MCF 10A (cell line): ENCODE measurements at regions of chr1 and their contacts with region 1.

Region 1: DNA sequence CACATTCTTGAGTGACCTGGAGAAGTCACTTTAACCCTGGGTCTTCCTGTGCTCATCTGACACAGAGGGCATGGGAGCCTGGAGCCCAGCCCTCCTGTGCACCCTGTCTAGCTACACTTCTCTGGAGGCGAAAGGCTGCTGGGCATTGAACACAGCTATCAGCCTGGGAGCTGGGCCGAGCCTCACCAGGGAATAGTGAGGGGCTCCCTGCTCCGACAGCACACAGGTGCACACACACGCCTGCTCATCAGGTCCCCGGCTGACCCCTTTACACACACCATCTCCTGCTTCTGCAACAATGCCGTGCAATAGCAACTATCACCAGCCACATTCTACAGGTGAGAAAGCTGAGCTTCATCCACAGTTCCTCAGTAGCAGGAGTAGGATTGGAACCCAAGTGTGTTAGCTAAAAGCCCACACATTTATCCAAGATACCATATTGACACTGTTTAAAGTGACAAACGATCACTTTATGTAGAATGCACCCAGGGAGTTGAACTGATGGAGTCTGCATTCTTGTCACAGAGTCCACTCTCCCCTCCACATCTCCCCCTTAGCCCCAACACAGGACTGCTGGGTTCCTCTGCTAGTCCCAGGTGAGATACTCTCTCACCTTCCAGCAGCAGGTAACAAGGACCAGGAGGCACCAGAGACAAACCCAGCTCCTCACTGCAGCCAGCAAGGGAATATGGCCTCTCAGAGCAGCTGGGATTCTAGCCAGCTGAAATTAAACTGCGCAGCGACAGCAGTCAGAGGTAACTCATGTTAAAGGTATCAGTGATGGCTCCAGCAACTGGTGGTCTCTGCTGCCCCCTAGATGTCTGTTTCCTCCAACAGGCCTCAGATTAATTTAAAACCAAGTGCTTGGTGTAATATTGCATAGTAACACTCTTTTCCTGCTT is 18.3 kb upstream of the CAPN8 start:
- DNase-seq: peak; percentile 85
- H3K4me3 Mint-ChIP-seq: no peak overlapping the region
- H3K27ac Mint-ChIP-seq: no peak overlapping the region
- H3K4me1 Mint-ChIP-seq: peaks cover 6% of the 10 kb centered on the region
- H3K27me3 Mint-ChIP-seq: no peaks in the 10 kb centered on the region
- CTCF ChIP-seq: peak; percentile 94

Region 2: GRCh38 chr1:223097713-223098112 is 586.1 kb before region 1 on chr1:
- CTCF ChIA-PET with region 1: interaction called, 19 read pairs
- POLR2A ChIA-PET with region 1: no interaction called
- intact Hi-C with region 1: loop called (anchors 5 kb)
- DNase-seq: no peak
- H3K4me3 Mint-ChIP-seq: no peak overlapping the region
- H3K27ac Mint-ChIP-seq: no peak overlapping the region
- H3K4me1 Mint-ChIP-seq: no peaks in the 10 kb centered on the region
- H3K27me3 Mint-ChIP-seq: no peaks in the 10 kb centered on the region
- CTCF ChIP-seq: no peak

Region 3: DNA sequence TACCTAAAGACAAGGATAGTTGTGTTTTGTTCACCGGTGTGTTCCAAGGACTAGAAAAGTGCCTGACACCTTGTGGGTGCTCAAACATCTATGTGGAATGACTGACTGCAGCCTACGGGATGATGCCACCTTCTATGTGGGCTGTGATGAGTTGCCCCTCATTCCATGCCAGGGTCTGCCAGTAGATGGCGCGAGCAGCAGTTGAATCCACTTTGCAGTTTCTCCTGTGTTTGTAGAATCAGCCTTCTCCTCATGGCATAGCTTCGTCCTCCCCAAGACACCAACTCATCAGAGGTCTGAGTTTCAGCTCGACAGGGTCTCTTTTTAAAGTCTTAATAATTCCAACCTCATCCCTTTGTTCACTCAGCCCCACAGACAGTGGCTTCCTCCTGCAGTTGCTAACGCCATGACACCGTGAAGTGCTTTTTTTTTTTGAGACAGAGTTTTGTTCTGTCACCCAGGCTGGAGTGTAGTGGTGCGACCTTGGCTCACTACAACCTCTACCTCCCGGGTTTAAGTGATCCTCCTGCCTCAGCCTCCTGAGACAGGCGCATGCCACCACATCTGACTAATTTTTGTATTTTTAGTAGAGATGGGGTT is 152.0 kb before region 1 on chr1:
- CTCF ChIA-PET with region 1: interaction called, 11 read pairs
- POLR2A ChIA-PET with region 1: no interaction called
- intact Hi-C with region 1: loop called (anchors 1 kb)
- DNase-seq: peak; percentile 87
- H3K4me3 Mint-ChIP-seq: no peak overlapping the region
- H3K27ac Mint-ChIP-seq: no peak overlapping the region
- H3K4me1 Mint-ChIP-seq: no peaks in the 10 kb centered on the region
- H3K27me3 Mint-ChIP-seq: peaks cover 24% of the 10 kb centered on the region
- CTCF ChIP-seq: peak; percentile 90

Region 4: DNA sequence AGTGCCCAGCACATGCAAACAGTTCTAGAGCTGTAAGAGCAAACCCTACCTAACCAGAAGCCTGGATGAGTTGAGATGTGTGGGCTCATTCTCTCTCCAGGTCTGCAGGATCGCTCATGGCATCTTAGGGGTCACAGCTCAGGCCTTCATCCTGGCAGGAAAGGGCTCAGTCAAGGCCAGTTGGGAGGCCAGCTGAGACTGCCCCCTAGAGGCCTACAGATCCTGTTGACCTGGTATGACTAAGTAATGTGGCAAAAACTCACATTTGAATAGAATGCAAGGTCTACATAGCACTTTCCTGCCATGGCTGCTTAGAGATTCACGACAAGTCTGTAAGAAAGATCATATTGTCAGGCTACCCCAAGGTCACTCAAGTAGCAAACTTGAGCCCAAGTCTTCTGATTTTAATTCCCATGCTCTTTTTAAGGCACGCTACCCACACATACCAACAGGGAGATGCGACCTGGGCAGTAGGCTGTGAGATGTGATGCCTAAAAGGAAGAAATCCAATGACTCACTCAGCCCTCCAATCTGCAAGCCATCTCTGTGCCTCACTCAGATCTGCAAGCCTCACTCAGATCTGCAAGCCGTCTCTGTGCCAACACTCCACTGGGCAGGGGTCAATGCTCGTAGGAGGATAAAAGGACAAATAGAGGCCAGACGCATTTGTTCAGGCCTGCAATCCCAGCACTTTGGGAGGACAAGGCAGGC is 13.2 kb before region 1 on chr1:
- CTCF ChIA-PET with region 1: interaction called, 31 read pairs
- POLR2A ChIA-PET with region 1: interaction called, 3 read pairs
- intact Hi-C with region 1: no loop called
- DNase-seq: peak; percentile 87
- H3K4me3 Mint-ChIP-seq: no peak overlapping the region
- H3K27ac Mint-ChIP-seq: no peak overlapping the region
- H3K4me1 Mint-ChIP-seq: peaks cover 22% of the 10 kb centered on the region
- H3K27me3 Mint-ChIP-seq: no peaks in the 10 kb centered on the region
- CTCF ChIP-seq: peak; percentile 97